Activated T-helper 1 cell treated with anti-CD3 and anti-CD28 coated beads, Interleukin-12 subunit alpha, Interleukin-12 subunit beta, Interleukin-2, Interleukin-4 antibody, amounts not matched to agents 30 ng/mL and 10 ng/mL and 1 ng/mL, durations not matched to agents 14 hours and 24 hours and 36 hours (primary cell): ENCODE measurements at regions of chr4 and their contacts with region 1.

Region 1: GRCh38 chr4:142379277-142380057 is 466.6 kb downstream of the INPP4B start:
- DNase-seq: no peak
- H3K4me3 Mint-ChIP-seq: no peak overlapping the region
- H3K27ac Mint-ChIP-seq: no peak overlapping the region
- H3K4me1 Mint-ChIP-seq: peaks cover 61% of the 10 kb centered on the region
- H3K27me3 Mint-ChIP-seq: no peaks in the 10 kb centered on the region

Region 2: DNA sequence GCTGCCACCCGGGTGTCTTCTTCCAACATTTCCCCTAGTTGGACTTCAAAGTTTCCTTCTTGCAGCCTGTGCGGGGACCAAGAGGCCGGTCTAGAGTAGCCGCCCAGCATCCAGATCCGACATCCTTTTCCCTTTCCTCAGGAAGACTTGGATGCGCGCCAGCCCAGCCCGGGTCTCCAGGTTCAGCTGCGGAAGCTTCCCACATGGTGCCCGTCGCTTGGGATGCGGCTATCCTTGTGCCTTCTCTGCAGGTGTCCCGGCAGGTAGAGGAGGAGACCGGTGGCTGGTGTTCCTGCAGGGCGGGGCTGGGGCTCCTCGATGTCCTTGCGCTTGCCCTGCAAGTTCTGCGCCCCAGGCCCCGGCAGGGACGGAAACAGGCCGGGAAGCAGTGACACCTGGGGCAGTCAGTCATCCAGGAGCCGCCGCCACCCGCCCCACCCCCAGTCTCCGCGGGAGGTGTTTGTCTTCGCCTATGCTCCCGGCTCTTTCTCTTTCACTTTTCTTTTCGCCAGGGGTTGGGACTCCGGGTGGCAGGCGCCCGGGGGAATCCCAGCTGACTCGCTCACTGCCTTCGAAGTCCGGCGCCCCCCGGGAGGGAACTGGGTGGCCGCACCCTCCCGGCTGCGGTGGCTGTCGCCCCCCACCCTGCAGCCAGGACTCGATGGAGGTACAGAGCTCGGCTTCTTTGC is 743.2 kb before region 1 on chr4 and contains the start of gene IL15:
- intact Hi-C with region 1: loop called (anchors 10 kb)
- DNase-seq: peak; percentile 70
- H3K4me3 Mint-ChIP-seq: peak within 1 kb of the TSS; percentile 96
- H3K27ac Mint-ChIP-seq: peak within 1 kb of the TSS; percentile 81
- H3K4me1 Mint-ChIP-seq: peaks cover 25% of the 10 kb centered on the region
- H3K27me3 Mint-ChIP-seq: peaks cover 20% of the 10 kb centered on the region
- total RNA-seq, gene IL15: 0.67 and 1.8 TPM in 2 replicates

Region 3: GRCh38 chr4:142367418-142368180 is 11.9 kb before region 1 on chr4:
- intact Hi-C with region 1: loop called (anchors 1 kb)
- DNase-seq: no peak
- H3K4me3 Mint-ChIP-seq: no peak overlapping the region
- H3K27ac Mint-ChIP-seq: peak overlapping the region; percentile 30
- H3K4me1 Mint-ChIP-seq: peaks cover 65% of the 10 kb centered on the region
- H3K27me3 Mint-ChIP-seq: no peaks in the 10 kb centered on the region

Region 4: GRCh38 chr4:142416711-142417275 is 37.3 kb after region 1 on chr4:
- intact Hi-C with region 1: loop called (anchors 1 kb)
- DNase-seq: no peak
- H3K4me3 Mint-ChIP-seq: peak overlapping the region; percentile 50
- H3K27ac Mint-ChIP-seq: peak overlapping the region; percentile 91
- H3K4me1 Mint-ChIP-seq: peaks cover 33% of the 10 kb centered on the region
- H3K27me3 Mint-ChIP-seq: no peaks in the 10 kb centered on the region

Region 5: DNA sequence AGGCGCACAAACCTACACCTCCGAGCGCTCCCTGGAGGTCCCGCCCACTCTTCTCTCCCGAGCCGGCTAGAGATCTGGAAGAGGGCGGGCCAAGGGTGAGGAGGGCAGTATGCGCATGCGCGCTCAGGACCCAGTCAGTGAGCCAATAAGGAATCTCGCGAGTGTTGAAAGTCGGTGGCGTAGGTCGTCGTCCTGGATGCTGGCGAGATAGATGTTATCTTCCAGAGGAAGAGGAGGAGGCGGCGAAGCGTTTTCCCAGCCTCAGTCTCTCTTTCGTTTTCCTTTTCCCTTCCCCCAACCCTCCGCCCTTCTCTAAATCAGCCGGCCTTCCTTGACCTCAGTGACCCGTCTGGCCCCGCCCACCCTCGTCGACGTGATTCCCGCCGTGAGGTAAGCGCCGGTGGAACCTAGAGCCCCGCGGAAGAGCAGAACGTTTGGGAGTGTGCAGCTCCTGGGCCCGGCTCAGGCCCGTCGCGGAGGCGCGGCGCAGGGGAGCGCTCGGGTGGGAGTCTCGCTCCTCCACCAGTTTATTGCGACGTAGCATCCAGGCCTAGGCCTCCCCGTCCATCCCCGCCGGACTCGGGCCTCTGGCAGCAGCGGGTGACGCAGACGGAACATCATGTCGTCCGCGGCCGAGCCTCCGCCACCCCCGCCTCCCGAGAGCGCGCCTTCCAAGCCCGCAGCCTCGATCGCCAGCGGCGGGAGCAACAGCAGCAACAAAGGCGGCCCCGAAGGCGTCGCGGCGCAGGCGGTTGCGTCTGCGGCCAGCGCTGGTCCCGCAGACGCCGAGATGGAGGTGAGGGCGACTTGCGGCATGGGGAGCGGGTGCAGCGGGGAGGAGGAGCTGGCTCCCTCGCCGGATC is 1134.1 kb after region 1 on chr4 and contains the start of gene SMARCA5:
- intact Hi-C with region 1: loop called (anchors 2 kb)
- DNase-seq: peak; percentile 95
- H3K4me3 Mint-ChIP-seq: peak within 1 kb of the TSS; percentile 94
- H3K27ac Mint-ChIP-seq: peak within 1 kb of the TSS; percentile 93
- H3K4me1 Mint-ChIP-seq: peaks cover 29% of the 10 kb centered on the region
- H3K27me3 Mint-ChIP-seq: peaks cover 10% of the 10 kb centered on the region
- total RNA-seq, gene SMARCA5: 59.9 and 60.7 TPM in 2 replicates